ENCODE measurements at regions of chr20 and their contacts with region 1.

Region 1: DNA sequence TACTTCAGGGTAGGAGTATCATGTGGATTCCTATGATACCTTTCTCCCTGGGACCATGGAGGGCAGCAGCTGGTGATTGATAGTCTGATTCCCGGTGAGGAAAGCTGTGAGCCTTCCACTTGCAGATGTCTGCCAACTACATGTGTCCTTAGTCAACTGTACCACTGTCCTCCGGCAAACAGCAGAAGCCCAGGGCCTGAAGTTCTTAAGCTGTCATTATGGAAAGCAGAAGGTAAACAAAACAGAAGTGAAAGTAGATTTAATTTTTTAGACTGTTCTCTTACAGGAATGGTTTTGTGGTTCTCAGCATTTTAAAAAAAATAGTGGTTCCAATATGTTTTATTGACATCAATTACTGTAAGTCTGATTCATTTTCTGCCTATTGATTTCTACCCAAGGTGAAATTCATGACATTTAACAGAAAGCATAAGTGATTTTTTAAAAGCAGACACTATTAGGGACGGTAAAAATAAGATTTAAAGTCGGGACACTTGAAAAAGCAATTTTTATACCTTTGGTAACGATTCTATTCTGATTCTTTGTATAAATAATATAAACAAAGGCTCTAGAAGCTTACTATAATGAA is 36.6 kb downstream of the PTPN1 start:
- DNase-seq: no peak
- H3K4me3 Mint-ChIP-seq: peak overlapping the region; percentile 81
- H3K27ac Mint-ChIP-seq: peak overlapping the region; percentile 86
- H3K4me1 Mint-ChIP-seq: peaks cover 67% of the 10 kb centered on the region
- H3K27me3 Mint-ChIP-seq: no peaks in the 10 kb centered on the region

Region 2: GRCh38 chr20:50561379-50562078 is 14.7 kb after region 1 on chr20:
- intact Hi-C with region 1: loop called (anchors 1 kb)
- DNase-seq: peak; percentile 32
- H3K4me3 Mint-ChIP-seq: peak overlapping the region; percentile 87
- H3K27ac Mint-ChIP-seq: peak overlapping the region; percentile 98
- H3K4me1 Mint-ChIP-seq: peaks cover 62% of the 10 kb centered on the region
- H3K27me3 Mint-ChIP-seq: no peaks in the 10 kb centered on the region

Region 3: DNA sequence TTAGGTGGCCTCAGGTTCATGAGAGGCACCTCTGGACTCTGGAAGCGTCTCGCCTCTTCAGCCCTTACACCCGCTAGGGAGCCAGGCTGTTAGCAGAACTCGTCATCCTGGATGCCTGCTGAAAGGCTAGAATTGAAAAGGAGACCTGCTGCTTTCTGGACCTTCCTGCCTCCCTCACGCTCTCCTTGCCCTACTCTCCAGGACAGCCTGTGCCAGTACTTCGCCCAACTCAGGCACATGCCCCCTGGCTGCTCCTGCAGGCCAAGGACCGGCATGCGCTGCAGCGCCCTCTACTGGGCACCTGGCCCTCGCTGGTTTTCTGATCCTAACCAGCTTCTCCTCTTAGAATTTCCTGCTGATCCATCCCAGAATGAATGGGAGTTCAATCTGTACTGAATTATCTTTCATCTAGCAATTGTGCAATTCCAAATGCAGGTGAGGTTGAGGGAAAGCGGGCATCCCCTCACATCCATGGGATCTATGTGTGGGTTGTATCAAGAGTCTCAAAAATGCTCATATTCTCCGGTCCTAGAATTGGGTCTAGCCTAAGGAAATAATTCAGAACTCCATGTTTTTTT is 41.3 kb after region 1 on chr20:
- intact Hi-C with region 1: no loop called
- DNase-seq: peak; percentile 51
- H3K4me3 Mint-ChIP-seq: no peak overlapping the region
- H3K27ac Mint-ChIP-seq: no peak overlapping the region
- H3K4me1 Mint-ChIP-seq: peaks cover 4% of the 10 kb centered on the region
- H3K27me3 Mint-ChIP-seq: no peaks in the 10 kb centered on the region